Psoas muscle (tissue), 8 donors: ENCODE measurements at regions of chr19 and their contacts with region 1.

Region 1: DNA sequence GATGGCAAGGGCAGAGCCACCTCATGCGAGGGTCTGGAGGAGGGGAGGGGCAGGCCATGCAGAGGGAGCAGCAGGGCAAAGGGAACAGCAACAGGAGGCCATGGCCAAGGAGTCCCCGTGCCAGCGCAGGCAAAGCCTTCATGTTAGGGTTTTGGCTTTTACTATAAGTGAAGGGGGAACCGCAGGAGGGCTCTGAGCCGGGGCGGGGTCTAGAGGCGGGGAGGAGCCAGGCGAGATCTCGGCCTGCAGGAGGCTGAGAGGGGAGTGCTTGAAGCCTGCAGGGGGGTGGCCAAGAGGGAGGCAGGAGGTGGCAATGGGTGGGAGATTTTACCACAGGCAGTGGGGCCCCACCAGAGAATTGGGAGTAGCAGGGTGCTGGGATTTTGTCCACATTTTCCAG is 6.3 kb downstream of the ARHGAP33 start:
- DNase-seq: no peak
- ATAC-seq: no peak
- H3K4me3 ChIP-seq: no peak overlapping the region
- H3K27ac ChIP-seq: no peak overlapping the region
- H3K4me1 ChIP-seq: no peaks in the 10 kb centered on the region
- H3K27me3 ChIP-seq: no peaks in the 10 kb centered on the region
- CTCF ChIP-seq: no peak

Region 2: GRCh38 chr19:34345947-34346351 is 1435.7 kb before region 1 on chr19:
- intact Hi-C with region 1: no loop called
- DNase-seq: peak; percentile 63 to 79
- ATAC-seq: peak; percentile 73 to 89 (median 84)
- H3K4me3 ChIP-seq: no peak overlapping the region
- H3K27ac ChIP-seq: no peak overlapping the region
- H3K4me1 ChIP-seq: no peaks in the 10 kb centered on the region
- H3K27me3 ChIP-seq: no peaks in the 10 kb centered on the region
- CTCF ChIP-seq: peak; percentile 70

Region 3: DNA sequence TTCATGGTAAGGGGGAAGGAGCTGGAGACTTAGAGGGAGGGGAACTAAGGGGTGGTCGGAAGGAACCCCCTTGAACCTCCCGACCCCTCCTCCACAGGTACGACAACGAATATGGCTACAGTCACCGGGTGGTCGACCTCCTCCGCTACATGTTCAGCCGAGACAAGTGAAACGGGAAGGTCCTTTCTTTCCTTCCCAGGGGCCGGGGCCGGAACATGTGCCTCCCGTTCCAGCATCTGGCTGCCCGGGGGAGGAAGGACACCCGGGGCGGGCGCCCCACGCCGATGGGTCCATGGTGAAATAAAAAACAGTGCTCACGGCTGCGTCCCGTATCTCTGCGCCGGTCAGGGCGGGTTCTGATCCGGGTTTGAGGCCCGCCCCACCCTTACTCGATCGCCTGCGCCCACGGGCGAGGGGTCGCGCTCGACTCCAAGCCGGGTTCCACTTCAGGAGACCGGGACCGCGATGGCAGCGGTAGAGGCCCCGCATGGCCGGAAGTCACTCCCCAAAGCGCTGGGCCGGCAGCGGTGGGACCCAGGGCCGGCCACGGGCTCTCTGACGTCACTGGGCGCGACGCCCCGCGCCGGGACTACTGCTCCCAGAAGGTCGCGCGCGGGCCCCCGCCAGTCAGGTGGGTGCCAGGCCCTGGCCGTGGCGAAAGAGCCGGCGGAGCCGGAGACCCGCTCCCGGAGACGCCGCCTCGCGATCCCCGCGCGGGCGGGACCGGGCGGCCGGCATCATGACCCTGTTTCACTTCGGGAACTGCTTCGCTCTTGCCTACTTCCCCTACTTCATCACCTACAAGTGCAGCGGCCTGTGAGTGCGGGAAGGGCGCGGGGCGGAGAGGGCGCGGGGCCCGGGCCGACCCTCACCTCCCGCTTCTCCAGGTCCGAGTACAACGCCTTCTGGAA is 236.4 kb before region 1 on chr19 and contains the start of gene TMEM147:
- intact Hi-C with region 1: no loop called
- DNase-seq: peak; percentile 97
- ATAC-seq: peak; percentile 98 to 99 (median 99)
- H3K4me3 ChIP-seq: peak within 1 kb of the TSS; percentile 79
- H3K27ac ChIP-seq: peak within 1 kb of the TSS; percentile 90
- H3K4me1 ChIP-seq: peaks cover 27% of the 10 kb centered on the region
- H3K27me3 ChIP-seq: no peaks in the 10 kb centered on the region
- CTCF ChIP-seq: no peak
- total RNA-seq, gene TMEM147: 77.1 to 103 (median 85.5) TPM

Region 4: GRCh38 chr19:35828692-35829301 is 47.1 kb after region 1 on chr19:
- intact Hi-C with region 1: loop called in 1 of 2 experiments (anchors 1 kb)
- DNase-seq: peak in 1 of 2 donors; percentile 48
- ATAC-seq: peak in 1 of 4 donors; percentile 48
- H3K4me3 ChIP-seq: no peak overlapping the region
- H3K27ac ChIP-seq: no peak overlapping the region
- H3K4me1 ChIP-seq: no peaks in the 10 kb centered on the region
- H3K27me3 ChIP-seq: peaks cover 0 to 14% (median 2%) of the 10 kb centered on the region in 3 donors
- CTCF ChIP-seq: no peak